Posterior cingulate gyrus (tissue), 11 donors: ENCODE measurements at regions of chr11 and their contacts with region 1.

Region 1: GRCh38 chr11:63671322-63672155 is at the start of gene ATL3:
- DNase-seq: peak; percentile 96 to 99 (median 98)

Region 2: DNA sequence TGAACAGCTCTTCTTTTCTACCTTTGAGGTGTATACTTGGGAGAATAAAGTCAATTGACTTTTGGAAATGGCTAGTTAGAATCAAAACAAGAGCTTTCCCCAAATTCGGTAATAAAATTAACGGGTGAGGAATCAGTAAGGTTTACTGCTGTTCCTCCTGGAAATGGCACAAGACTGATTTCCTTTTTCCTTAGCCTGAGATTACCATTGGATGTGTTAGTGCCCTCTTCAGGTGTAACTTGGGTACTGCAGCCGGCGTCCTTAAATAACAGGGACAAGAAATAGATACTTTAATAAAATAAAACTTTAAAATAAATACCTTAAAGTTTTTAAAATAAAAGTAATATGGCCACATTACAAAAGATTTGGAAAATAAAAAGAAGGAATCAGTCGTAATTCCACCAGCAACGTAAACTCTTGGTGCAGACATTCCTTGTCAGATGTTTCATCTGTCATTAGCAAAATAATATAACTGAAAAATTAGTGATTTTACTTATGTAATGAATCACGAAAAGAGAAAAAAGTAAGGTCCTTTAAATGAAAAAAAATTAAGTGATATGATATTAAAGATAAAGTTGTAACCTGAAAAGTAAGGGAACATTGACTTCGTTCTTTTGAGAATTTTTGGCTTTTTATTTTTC is 67.3 kb after region 1 on chr11:
- intact Hi-C with region 1: loop called (anchors 2 kb)
- DNase-seq: peak in 8 of 10 donors; percentile 23 to 88 (median 78)

Region 3: DNA sequence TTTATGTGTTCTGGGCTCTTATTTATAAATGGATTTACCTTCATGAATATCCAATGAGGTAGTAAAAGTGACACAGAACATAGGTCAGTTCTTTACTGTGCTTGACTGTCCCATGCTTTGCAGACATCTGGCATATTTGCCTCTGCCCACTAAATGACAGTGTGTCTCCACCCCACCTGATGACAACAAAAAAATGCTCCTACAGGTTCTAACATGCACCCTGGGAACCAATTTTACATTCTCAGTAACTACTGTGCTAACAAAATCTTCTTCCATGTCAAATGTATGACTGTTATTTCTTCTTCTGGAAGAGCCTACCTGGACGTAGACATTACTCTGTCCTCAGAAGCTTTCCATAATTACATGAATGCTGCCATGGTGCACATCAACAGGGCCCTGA is 80.7 kb after region 1 on chr11:
- intact Hi-C with region 1: no loop called
- DNase-seq: no peak

Region 4: GRCh38 chr11:64156235-64157011 is 484.9 kb after region 1 on chr11:
- intact Hi-C with region 1: no loop called
- DNase-seq: peak in 7 of 10 donors; percentile 29 to 95 (median 57)